ENCODE measurements at regions of chr1 and their contacts with region 1.

Region 1: DNA sequence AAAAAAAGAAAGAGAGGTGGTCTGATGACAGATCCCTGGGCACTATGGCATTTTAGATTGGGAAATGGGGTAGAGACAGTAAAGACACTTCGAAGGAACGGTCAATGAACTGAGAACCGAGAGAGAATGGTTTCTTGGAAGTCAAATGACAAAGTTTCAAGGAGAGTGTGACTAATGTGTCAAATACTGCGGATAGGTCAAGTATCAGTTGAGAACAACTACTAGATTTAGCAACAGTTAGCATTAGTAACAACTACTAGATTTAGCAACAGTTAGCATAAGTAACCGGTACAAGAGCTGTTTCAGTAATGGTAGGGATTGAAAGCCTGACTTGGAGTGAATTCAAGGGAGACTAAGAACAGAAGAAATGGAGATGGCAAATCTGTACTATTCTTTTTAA is 35.0 kb downstream of the UROD start:
- DNase-seq: no peak
- ATAC-seq: peak; percentile 57
- H3K4me3 Mint-ChIP-seq: no peak overlapping the region
- H3K27ac Mint-ChIP-seq: no peak overlapping the region
- H3K4me1 Mint-ChIP-seq: peaks cover 14% of the 10 kb centered on the region
- H3K27me3 Mint-ChIP-seq: no peaks in the 10 kb centered on the region

Region 2: DNA sequence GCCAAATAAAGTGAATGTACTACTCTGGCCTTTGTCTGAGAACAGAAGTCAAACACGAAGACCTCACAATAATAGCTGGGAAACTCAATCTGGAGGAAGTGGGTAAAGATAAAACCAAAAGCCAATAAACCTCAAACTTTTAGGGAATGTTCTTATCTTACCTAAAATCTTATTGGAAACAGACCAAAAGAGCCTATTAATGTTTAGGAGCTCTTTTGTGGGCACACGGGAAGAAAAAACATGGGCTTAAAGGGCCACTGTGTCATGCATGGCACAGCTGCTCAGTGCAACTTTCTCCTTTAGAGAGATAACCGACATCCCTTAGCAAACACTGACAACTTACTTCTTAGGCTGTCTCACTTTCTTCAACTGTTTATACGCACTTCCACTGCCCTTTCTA is 76.7 kb before region 1 on chr1:
- CTCF ChIA-PET with region 1: no interaction called
- POLR2A ChIA-PET with region 1: no interaction called
- intact Hi-C with region 1: no loop called
- DNase-seq: no peak
- ATAC-seq: no peak
- H3K4me3 Mint-ChIP-seq: no peak overlapping the region
- H3K27ac Mint-ChIP-seq: no peak overlapping the region
- H3K4me1 Mint-ChIP-seq: peaks cover 5% of the 10 kb centered on the region
- H3K27me3 Mint-ChIP-seq: no peaks in the 10 kb centered on the region

Region 3: DNA sequence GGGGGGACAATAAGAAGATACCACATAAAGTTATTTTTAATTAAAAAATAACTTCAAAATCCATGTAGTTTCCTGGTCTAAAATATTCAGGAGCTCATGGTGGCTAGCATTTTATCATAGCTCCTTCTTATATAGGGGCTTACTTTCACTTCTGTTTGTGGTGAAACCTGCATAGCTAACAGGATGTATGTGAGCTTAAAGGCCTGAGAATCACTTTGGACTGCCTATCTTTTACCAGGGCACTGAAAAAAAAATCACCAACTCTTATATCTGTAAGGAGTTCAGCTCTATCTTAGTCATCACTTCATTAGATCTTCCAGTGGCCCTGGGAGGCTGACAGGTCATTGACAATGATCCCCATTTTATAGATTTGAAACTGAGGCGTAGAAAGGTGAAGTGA is 13.7 kb before region 1 on chr1:
- CTCF ChIA-PET with region 1: no interaction called
- POLR2A ChIA-PET with region 1: no interaction called
- intact Hi-C with region 1: no loop called
- DNase-seq: no peak
- ATAC-seq: no peak
- H3K4me3 Mint-ChIP-seq: no peak overlapping the region
- H3K27ac Mint-ChIP-seq: no peak overlapping the region
- H3K4me1 Mint-ChIP-seq: peaks cover 7% of the 10 kb centered on the region
- H3K27me3 Mint-ChIP-seq: no peaks in the 10 kb centered on the region

Region 4: DNA sequence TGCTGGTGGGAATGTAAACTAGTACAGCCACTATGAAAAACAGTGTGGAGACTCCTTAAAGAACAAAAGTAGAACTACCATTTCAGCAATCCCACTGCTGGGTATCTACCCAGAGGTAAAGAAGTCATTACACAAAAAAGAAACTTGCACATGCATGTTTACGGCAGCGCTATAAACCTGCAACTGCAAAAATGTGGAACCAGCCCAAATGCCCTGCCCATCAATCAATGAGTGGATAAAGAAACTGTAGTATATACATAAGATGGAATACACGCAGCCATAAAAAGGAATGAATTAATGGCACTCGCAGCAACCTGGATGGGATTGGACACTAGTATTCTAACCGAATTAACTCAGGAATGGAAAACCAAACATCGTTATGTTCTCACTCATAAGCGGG is 108.4 kb after region 1 on chr1:
- CTCF ChIA-PET with region 1: no interaction called
- POLR2A ChIA-PET with region 1: no interaction called
- intact Hi-C with region 1: no loop called
- DNase-seq: no peak
- ATAC-seq: no peak
- H3K4me3 Mint-ChIP-seq: no peak overlapping the region
- H3K27ac Mint-ChIP-seq: no peak overlapping the region
- H3K4me1 Mint-ChIP-seq: no peaks in the 10 kb centered on the region
- H3K27me3 Mint-ChIP-seq: peaks cover 3% of the 10 kb centered on the region

Region 5: DNA sequence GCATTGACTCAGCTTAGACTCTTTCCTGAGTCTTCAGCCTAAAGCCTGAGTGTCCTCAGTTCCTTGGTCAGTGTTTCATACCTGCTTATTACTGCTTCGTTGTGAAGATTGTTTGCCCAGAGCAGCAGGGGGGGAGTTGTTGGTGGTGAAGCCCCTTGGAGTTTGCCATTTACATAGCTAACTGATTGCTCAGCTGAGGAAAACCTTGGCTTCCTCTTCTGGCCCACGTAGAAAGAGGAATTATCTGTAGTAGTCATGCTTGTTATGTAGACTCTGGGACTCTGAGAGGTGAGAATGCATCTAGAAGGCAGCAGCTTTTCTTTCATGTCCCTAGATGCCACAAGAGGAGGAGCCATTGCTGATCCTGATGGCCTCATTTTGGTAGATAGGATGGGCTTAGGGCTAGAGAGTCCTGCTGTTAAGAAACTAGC is 882.2 kb after region 1 on chr1:
- CTCF ChIA-PET with region 1: no interaction called
- POLR2A ChIA-PET with region 1: no interaction called
- intact Hi-C with region 1: loop called in 1 of 2 experiments (anchors 5 kb)
- DNase-seq: no peak
- ATAC-seq: no peak
- H3K4me3 Mint-ChIP-seq: no peak overlapping the region
- H3K27ac Mint-ChIP-seq: no peak overlapping the region
- H3K4me1 Mint-ChIP-seq: peaks cover 6% of the 10 kb centered on the region
- H3K27me3 Mint-ChIP-seq: no peaks in the 10 kb centered on the region

Measured in activated CD4-positive, alpha-beta T cell treated with anti-CD3 and anti-CD28 coated beads for 36 hours (primary cell).